ENCODE measurements at regions of chr11 and their contacts with region 1.

Region 1: DNA sequence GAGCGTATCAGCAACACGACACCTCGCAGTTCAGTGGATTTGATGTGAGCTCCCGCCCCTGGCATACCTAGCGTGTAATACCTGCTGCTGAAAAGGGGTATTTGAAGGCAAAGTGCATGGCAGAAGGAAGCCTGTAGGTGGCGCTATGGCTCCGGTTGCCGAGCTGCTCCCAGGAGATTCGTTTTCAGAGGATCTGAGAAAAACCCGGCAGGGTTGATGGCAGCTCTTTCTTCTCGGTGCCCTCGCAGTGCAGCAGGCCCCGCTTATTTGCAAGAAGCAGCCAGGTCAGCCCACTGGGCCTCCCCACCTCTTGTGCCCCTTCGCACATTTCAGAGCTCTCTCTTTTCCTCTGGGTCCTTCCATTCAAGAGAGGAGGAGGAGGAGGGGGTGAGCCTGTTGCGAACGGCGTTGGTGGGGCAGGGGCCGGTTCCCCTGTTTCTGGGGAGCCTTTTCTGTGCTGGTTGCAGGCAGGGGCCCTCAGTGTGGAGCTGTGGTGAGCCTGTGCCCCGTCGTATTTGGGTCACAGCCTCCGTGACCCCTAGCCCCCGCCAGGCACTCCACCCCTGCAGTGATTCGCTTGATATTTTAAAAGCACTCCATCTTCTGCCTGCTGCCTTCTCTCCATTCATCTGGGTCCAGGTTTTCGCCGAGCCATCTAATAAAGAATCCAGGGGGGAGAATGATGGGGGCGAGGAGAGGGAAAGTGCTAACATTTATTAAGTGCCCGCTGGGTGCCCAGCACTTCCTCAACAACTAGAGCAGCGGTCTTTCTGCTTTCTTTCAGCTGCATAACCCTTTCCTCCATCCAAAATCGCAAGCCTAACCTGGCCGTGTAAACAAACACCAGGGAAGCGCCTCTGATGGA is 85.3 kb upstream of the SYT13 start:
- DNase-seq: peak in 5 of 6 donors; percentile 52 to 85 (median 74)
- ATAC-seq: peak; percentile 77 to 97 (median 92)
- H3K4me3 ChIP-seq: no peak overlapping the region
- H3K27ac ChIP-seq: no peak overlapping the region
- H3K4me1 ChIP-seq: no peaks in the 10 kb centered on the region
- H3K27me3 ChIP-seq: no peaks in the 10 kb centered on the region
- CTCF ChIP-seq: peak; percentile 76 to 92 (median 88)

Region 2: DNA sequence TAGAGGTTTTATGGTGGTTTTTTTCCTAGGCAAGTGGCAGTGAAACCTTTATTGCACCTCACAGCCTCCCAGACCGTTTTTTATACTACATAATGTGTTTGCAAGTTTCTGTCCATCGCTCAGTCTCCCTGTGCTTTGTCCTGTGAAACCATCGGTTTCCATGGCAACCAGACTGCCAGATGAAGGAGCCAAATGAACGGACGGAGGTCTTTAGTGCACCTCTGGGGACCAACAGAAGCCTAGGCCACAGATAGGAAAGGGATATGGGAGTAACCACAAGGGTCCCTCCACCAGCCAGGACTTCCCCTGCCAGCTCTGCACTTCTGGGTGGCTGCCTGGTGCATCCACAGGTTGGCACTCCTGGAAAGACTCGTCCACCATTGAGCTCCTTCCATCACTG is 129.0 kb after region 1 on chr11:
- intact Hi-C with region 1: no loop called
- DNase-seq: no peak
- ATAC-seq: no peak
- H3K4me3 ChIP-seq: no peak overlapping the region
- H3K27ac ChIP-seq: no peak overlapping the region
- H3K4me1 ChIP-seq: no peaks in the 10 kb centered on the region
- H3K27me3 ChIP-seq: peaks cover 0 to 3% (median 0%) of the 10 kb centered on the region in 4 donors
- CTCF ChIP-seq: no peak

Region 3: GRCh38 chr11:45655347-45655756 is 283.9 kb after region 1 on chr11:
- intact Hi-C with region 1: loop called in 2 of 3 experiments (anchors 10 kb)
- DNase-seq: peak in 5 of 6 donors; percentile 42 to 91 (median 70)
- ATAC-seq: peak; percentile 78 to 93 (median 89)
- H3K4me3 ChIP-seq: no peak overlapping the region
- H3K27ac ChIP-seq: no peak overlapping the region
- H3K4me1 ChIP-seq: no peaks in the 10 kb centered on the region
- H3K27me3 ChIP-seq: no peaks in the 10 kb centered on the region
- CTCF ChIP-seq: peak; percentile 77 to 92 (median 84)